ENCODE measurements at regions of chr1 and their contacts with region 1.

Region 1: GRCh38 chr1:173824331-173825081 is at the starts of genes CENPL and DARS2:
- DNase-seq: peak; percentile 98
- ATAC-seq: peak; percentile 97
- H3K4me3 ChIP-seq: peak within 1 kb of the TSS; percentile 65
- H3K27ac ChIP-seq: peak within 1 kb of the TSS; percentile 84
- H3K4me1 ChIP-seq: peaks cover 2% of the 10 kb centered on the region; the same call in 1 of the 2 replicates
- H3K27me3 ChIP-seq: no peaks in the 10 kb centered on the region
- CTCF ChIP-seq: no peak
- POLR2A ChIP-seq: peak; percentile 86; the same call in 1 of the 2 replicates
- RAD21 ChIP-seq: no peak
- total RNA-seq, gene CENPL: 21.1 and 21.9 TPM in 2 replicates
- total RNA-seq, gene DARS2: 18.8 and 22.8 TPM in 2 replicates

Region 2: DNA sequence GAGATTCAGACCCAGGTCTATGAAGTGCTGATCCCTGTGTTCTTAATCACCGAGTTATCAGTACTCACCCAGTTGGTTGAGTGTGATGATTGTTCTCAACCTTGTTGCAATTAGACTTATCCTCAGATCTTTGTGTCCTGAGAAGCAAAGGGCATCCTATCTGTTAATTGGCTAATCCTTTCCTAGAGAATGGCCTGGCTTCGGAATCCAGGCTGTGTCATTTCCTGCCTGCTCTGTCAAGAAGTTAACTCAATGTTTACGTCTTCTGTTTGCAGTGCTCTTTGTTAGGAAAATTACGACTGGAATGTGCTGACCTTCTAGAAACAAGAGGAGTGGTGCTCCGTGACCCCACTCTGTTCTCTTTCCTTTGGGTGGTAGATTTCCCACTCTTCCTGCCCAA is 28.6 kb after region 1 on chr1:
- CTCF ChIA-PET with region 1: no interaction called
- POLR2A ChIA-PET with region 1: interaction called, 3 read pairs
- dilution Hi-C with region 1: no loop called
- in situ Hi-C with region 1: no loop called
- intact Hi-C with region 1: loop called (anchors 1 kb)
- DNase-seq: peak; percentile 88
- ATAC-seq: peak; percentile 65
- H3K4me3 ChIP-seq: no peak overlapping the region
- H3K27ac ChIP-seq: peak overlapping the region; percentile 86
- H3K4me1 ChIP-seq: peaks cover 18% of the 10 kb centered on the region
- H3K27me3 ChIP-seq: no peaks in the 10 kb centered on the region
- CTCF ChIP-seq: no peak
- POLR2A ChIP-seq: no peak
- RAD21 ChIP-seq: no peak

Measured in IMR-90 (cell line).